CD4-positive, alpha-beta T cell (primary cell): ENCODE measurements at regions of chr2 and their contacts with region 1.

Region 1: GRCh38 chr2:97697252-97698235 is 15.8 kb upstream of the ZAP70 start:
- DNase-seq: peak; percentile 86 to 98 (median 94)
- ATAC-seq: peak; percentile 92
- H3K4me3 ChIP-seq: no peak overlapping the region
- H3K4me3 Mint-ChIP-seq: no peak overlapping the region
- H3K27ac ChIP-seq: no peak overlapping the region
- H3K27ac Mint-ChIP-seq: no peak overlapping the region
- H3K4me1 ChIP-seq: peaks cover 2% of the 10 kb centered on the region
- H3K4me1 Mint-ChIP-seq: peaks cover 11% of the 10 kb centered on the region
- H3K27me3 ChIP-seq: no peaks in the 10 kb centered on the region
- H3K27me3 Mint-ChIP-seq: peaks cover 4% of the 10 kb centered on the region
- CTCF ChIP-seq: peak; percentile 90

Region 2: GRCh38 chr2:96065381-96065930 is 1632.1 kb before region 1 on chr2:
- CTCF ChIA-PET with region 1: no interaction called
- POLR2A ChIA-PET with region 1: no interaction called
- intact Hi-C with region 1: loop called in 1 of 2 experiments (anchors 10 kb)
- DNase-seq: no peak
- ATAC-seq: no peak
- H3K4me3 ChIP-seq: no peak overlapping the region
- H3K4me3 Mint-ChIP-seq: no peak overlapping the region
- H3K27ac ChIP-seq: no peak overlapping the region
- H3K27ac Mint-ChIP-seq: no peak overlapping the region
- H3K4me1 ChIP-seq: no peaks in the 10 kb centered on the region
- H3K4me1 Mint-ChIP-seq: no peaks in the 10 kb centered on the region
- H3K27me3 ChIP-seq: no peaks in the 10 kb centered on the region
- H3K27me3 Mint-ChIP-seq: no peaks in the 10 kb centered on the region
- CTCF ChIP-seq: no peak

Region 3: DNA sequence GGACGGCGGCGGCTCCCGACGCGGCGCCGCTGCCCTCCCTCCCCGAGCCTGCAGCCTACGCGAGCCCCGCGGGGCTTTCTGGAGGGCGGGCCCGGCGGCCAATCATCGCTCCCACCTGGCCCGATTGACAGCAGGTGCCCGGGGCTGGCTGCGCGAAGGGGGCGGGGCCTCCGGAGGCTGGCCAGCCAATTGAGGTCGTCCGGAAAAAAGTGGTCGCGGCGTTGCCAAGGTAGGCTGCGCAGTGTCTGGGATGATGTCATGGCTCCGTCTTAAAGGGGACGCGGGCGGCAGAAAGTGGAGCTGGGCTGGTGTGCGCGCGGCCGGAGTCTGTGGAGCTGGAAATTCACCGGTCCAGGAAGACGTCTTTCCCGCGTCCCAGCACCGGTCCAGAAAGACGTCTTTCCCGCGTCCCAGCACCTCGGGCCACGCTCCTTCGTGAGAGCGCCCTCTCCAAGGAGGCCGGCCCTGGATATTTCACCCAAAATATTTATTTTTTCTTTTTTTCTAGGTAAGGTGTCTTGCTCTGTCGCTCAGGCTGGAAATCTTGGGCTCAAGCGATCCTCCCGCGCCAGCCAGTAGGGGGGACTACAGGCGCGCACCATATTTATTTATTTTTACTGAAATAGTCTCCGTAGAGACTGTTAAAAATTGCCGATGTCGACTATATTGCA is 33.4 kb before region 1 on chr2 and contains the start of gene ACTR1B:
- CTCF ChIA-PET with region 1: interaction called, 23 read pairs
- POLR2A ChIA-PET with region 1: interaction called, 24 read pairs
- intact Hi-C with region 1: loop called (anchors 1 to 2 kb)
- DNase-seq: peak; percentile 94 to 99 (median 96)
- ATAC-seq: peak; percentile 86
- H3K4me3 ChIP-seq: peak within 1 kb of the TSS; percentile 96
- H3K4me3 Mint-ChIP-seq: peak within 1 kb of the TSS; percentile 100
- H3K27ac ChIP-seq: peak within 1 kb of the TSS; percentile 93 to 98
- H3K27ac Mint-ChIP-seq: peak within 1 kb of the TSS; percentile 99
- H3K4me1 ChIP-seq: peaks cover 34% of the 10 kb centered on the region
- H3K4me1 Mint-ChIP-seq: peaks cover 31% of the 10 kb centered on the region
- H3K27me3 ChIP-seq: no peaks in the 10 kb centered on the region
- H3K27me3 Mint-ChIP-seq: no peaks in the 10 kb centered on the region
- CTCF ChIP-seq: peak; percentile 66
- total RNA-seq, gene ACTR1B: 89.5 to 92.8 TPM

Region 4: DNA sequence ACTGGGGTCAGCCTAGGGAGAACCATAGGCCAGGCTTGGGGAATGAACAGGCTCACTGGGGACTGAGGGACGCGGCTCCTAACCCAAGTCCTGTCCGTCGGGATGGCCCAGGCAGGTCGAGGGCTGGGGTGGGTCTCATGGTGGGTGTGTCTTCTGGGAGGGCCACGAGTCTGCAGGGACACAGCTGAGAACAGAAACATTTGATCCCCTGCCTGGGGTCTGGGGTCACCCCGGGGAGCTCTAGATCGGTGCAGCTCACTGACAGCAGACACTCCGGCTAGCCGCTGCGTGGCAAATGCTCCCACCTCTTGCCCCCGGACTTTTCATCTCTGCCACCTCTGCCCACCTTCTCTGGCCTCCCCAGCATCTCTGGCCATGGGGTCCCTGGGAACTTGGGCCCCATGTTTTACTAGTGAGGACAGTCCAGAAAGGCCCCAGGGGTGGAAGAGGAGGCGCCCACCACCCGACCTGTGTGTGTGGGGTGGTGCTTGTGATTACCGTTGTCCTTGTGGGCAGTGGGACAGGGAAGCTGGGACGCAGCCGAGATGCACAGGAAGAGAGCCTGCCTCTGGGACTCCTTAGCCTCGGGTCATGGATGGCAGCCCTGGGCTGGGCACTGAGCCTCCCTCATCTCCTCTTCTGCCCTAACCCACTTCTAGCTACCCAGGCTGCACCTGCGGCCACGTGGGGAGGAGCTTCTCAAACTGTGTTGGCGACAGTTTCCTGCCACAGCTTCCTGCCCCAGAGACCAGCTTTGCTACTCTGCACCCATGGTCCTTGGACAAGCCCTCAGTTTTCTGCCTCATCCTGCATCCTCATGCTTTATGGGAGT is 20.7 kb after region 1 on chr2:
- CTCF ChIA-PET with region 1: interaction called, 15 read pairs
- POLR2A ChIA-PET with region 1: interaction called, 3 read pairs
- intact Hi-C with region 1: no loop called
- DNase-seq: peak; percentile 57 to 89 (median 74)
- ATAC-seq: peak; percentile 88
- H3K4me3 ChIP-seq: peak overlapping the region; percentile 76
- H3K4me3 Mint-ChIP-seq: peak overlapping the region; percentile 89
- H3K27ac ChIP-seq: peak overlapping the region; percentile 75 to 88
- H3K27ac Mint-ChIP-seq: peak overlapping the region; percentile 98
- H3K4me1 ChIP-seq: peaks cover 95% of the 10 kb centered on the region
- H3K4me1 Mint-ChIP-seq: peaks cover 92% of the 10 kb centered on the region
- H3K27me3 ChIP-seq: no peaks in the 10 kb centered on the region
- H3K27me3 Mint-ChIP-seq: no peaks in the 10 kb centered on the region
- CTCF ChIP-seq: no peak

Region 5: DNA sequence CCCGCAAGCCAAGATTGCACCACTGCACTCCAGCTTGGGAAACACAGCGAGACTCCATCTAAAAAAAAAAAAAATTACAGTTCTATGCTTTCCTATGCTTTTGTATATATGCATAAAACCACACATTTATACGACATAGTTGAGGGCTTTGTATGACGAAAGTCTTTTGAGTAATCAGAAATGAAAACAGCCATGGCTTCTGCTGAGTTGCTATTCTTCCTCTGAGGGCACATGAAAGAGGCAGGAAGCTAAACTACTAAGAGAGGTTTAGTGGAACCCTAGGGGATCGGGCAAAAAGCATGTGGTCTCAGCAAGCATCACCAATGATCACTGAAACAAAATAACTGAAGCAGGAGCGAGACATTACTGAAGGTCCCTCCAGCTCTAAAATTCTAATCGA is 115.4 kb after region 1 on chr2:
- CTCF ChIA-PET with region 1: no interaction called
- POLR2A ChIA-PET with region 1: no interaction called
- intact Hi-C with region 1: no loop called
- DNase-seq: no peak
- ATAC-seq: no peak
- H3K4me3 ChIP-seq: no peak overlapping the region
- H3K4me3 Mint-ChIP-seq: no peak overlapping the region
- H3K27ac ChIP-seq: no peak overlapping the region
- H3K27ac Mint-ChIP-seq: no peak overlapping the region
- H3K4me1 ChIP-seq: no peaks in the 10 kb centered on the region
- H3K4me1 Mint-ChIP-seq: no peaks in the 10 kb centered on the region
- H3K27me3 ChIP-seq: no peaks in the 10 kb centered on the region
- H3K27me3 Mint-ChIP-seq: no peaks in the 10 kb centered on the region
- CTCF ChIP-seq: no peak

Region 6: DNA sequence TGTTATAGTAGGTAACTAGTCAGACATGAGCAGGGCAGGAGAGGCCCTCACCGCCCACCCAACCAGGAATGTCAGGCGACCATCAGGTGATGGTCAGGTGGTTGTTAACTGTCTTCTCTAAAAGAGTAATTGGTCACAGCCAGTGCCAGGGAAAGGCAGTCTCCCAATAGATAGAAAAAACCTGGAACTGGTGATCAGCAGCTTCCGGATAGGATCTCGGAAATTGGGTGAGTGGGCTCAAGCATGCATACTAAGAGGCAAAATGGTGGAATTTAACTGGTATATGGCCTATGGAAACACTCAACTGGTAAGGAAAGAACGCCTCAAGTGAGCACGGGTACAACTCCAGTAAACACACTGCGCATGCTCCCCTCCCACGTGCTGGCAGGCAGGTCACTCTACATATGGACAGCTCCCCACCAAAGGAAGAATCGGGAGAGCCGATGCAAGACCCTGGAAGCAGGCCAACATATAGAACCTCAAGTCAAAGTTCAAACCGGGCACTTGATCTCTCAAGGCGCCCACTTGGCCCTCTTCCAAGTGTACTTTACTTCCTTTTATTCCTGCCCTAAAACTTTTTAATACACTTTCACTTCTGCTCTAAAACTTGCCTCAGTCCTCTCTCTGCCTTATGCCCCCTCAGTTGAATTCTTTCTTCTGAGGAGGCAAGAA is 341.7 kb after region 1 on chr2:
- CTCF ChIA-PET with region 1: no interaction called
- POLR2A ChIA-PET with region 1: no interaction called
- intact Hi-C with region 1: no loop called
- DNase-seq: peak in 2 of 14 experiments; percentile 29 to 44
- ATAC-seq: no peak
- H3K4me3 ChIP-seq: no peak overlapping the region
- H3K4me3 Mint-ChIP-seq: no peak overlapping the region
- H3K27ac ChIP-seq: no peak overlapping the region
- H3K27ac Mint-ChIP-seq: no peak overlapping the region
- H3K4me1 ChIP-seq: no peaks in the 10 kb centered on the region
- H3K4me1 Mint-ChIP-seq: no peaks in the 10 kb centered on the region
- H3K27me3 ChIP-seq: peaks cover 0 to 8% of the 10 kb centered on the region in 2 experiments
- H3K27me3 Mint-ChIP-seq: peaks cover 9% of the 10 kb centered on the region
- CTCF ChIP-seq: no peak

Region 7: DNA sequence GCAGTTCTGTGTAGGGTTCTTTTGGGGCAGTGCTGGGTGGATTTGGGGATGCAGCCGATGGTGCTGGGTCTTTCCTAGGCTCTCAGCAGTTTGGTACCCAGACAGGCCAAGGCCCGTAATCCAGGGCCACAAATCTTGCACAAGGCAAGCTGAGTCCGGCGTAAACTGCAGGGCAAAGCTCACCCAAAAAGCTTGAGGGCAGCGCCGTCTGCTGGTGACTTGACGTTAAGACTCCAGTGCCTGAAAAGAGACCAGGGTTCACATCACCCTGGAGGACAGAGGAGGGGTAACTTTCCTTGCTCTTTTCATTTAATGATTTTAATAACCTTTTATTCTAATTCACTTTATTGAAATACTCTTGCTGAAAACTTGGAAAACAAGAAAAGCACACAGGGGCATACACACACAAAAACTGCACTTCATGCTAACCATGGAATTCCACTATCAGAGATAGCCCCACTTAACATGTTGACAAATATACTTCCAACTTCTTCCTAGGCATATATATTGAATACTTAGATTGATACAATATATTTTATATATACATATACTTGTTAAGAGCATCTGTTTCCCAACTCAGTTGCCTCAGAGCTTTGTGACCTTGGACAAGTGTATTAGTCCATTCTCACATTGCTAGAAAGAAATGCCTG is 687.6 kb after region 1 on chr2:
- CTCF ChIA-PET with region 1: interaction called, 9 read pairs
- POLR2A ChIA-PET with region 1: no interaction called
- intact Hi-C with region 1: loop called in 1 of 2 experiments (anchors 2 kb)
- DNase-seq: peak; percentile 54 to 81 (median 64)
- ATAC-seq: peak; percentile 78
- H3K4me3 ChIP-seq: no peak overlapping the region
- H3K4me3 Mint-ChIP-seq: no peak overlapping the region
- H3K27ac ChIP-seq: no peak overlapping the region
- H3K27ac Mint-ChIP-seq: no peak overlapping the region
- H3K4me1 ChIP-seq: peaks cover 3% of the 10 kb centered on the region
- H3K4me1 Mint-ChIP-seq: no peaks in the 10 kb centered on the region
- H3K27me3 ChIP-seq: peaks cover 0 to 12% of the 10 kb centered on the region in 2 experiments
- H3K27me3 Mint-ChIP-seq: peaks cover 4% of the 10 kb centered on the region
- CTCF ChIP-seq: peak; percentile 92